ENCODE measurements at regions of chr16 and their contacts with region 1.

Region 1: GRCh38 chr16:77584205-77584859 is 138.0 kb upstream of the NUDT7 start:
- DNase-seq: peak in 1 of 2 experiments; percentile 59
- H3K4me3 ChIP-seq: no peak overlapping the region
- H3K27ac ChIP-seq: no peak overlapping the region
- H3K4me1 ChIP-seq: peaks cover 0 to 4% (median 0%) of the 10 kb centered on the region in 4 experiments; a peak in 1 of 7 replicates
- H3K27me3 ChIP-seq: peaks cover 0 to 2% (median 0%) of the 10 kb centered on the region in 4 experiments; a peak in 1 of 7 replicates
- CTCF ChIP-seq: peak; percentile 2 to 87 (median 65)
- EP300 ChIP-seq: no peak
- POLR2A ChIP-seq: no peak
- RAD21 ChIP-seq: peak; percentile 96 to 97

Region 2: GRCh38 chr16:77236063-77236511 is 348.2 kb before region 1 on chr16:
- CTCF ChIA-PET with region 1: interaction called, 234 read pairs
- POLR2A ChIA-PET with region 1: no interaction called
- DNase-seq: peak; percentile 79 to 98
- H3K4me3 ChIP-seq: no peak overlapping the region
- H3K27ac ChIP-seq: no peak overlapping the region
- H3K4me1 ChIP-seq: peaks cover 0 to 11% (median 7%) of the 10 kb centered on the region in 4 experiments; a peak in 4 of 7 replicates
- H3K27me3 ChIP-seq: no peaks in the 10 kb centered on the region; a peak in 1 of 7 replicates
- CTCF ChIP-seq: peak; percentile 99 to 100 (median 100)
- EP300 ChIP-seq: peak in 1 of 2 experiments; percentile 44; a peak in 1 of 3 replicates
- POLR2A ChIP-seq: no peak
- RAD21 ChIP-seq: peak; percentile 100

Region 3: GRCh38 chr16:77430787-77431585 is 153.3 kb before region 1 on chr16:
- CTCF ChIA-PET with region 1: interaction called, 223 read pairs
- POLR2A ChIA-PET with region 1: no interaction called
- DNase-seq: no peak
- H3K4me3 ChIP-seq: no peak overlapping the region
- H3K27ac ChIP-seq: no peak overlapping the region
- H3K4me1 ChIP-seq: peaks cover 0 to 4% (median 0%) of the 10 kb centered on the region in 4 experiments; a peak in 2 of 7 replicates
- H3K27me3 ChIP-seq: peaks cover 14 to 38% (median 32%) of the 10 kb centered on the region in 4 experiments
- CTCF ChIP-seq: no peak
- EP300 ChIP-seq: no peak
- POLR2A ChIP-seq: no peak
- RAD21 ChIP-seq: no peak; a peak in 1 of 4 replicates

Region 4: DNA sequence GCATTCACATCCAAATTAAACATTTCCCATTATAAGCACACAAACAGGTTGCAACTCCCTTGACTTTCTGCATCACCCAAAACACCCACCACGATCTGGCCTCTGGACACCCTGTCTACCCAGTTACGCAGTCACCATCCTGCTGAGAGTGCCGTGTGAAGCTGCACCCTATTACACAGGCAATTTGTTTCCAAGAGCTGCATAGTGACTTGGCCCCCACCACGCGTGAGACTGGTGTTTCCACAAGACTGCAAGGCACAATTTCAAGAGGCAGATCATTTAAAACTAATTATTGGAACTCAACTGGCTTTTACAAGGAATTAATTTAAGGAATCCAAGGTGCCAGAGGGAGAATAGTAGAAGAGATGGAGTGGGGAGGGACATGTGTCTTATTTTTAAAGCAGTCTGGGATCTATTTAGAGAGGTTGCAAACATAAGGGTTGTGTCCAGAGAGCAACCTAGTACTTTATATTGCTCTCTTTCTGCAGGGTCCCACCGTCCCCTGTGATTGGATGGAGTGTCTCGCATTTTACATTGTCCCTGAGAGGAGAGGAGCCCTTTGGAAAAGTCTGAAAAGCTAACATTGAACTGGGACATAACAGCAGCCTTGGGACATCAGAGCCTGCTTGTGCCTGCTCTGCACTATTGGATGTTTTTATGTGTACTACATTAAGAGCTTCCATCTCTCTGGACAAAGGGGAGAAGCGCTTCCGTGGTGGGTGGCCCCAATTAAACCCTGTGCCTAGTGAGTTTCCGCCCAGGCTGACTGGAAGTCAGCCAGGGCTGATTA is 140.8 kb before region 1 on chr16:
- CTCF ChIA-PET with region 1: interaction called, 223 read pairs
- POLR2A ChIA-PET with region 1: interaction called, 3 read pairs
- DNase-seq: no peak
- H3K4me3 ChIP-seq: no peak overlapping the region
- H3K27ac ChIP-seq: no peak overlapping the region
- H3K4me1 ChIP-seq: peaks cover 0 to 6% (median 2%) of the 10 kb centered on the region in 4 experiments; a peak in 3 of 7 replicates
- H3K27me3 ChIP-seq: no peaks in the 10 kb centered on the region
- CTCF ChIP-seq: no peak
- EP300 ChIP-seq: no peak
- POLR2A ChIP-seq: no peak
- RAD21 ChIP-seq: no peak

Region 5: GRCh38 chr16:77540646-77541045 is 43.7 kb before region 1 on chr16:
- CTCF ChIA-PET with region 1: interaction called, 17 read pairs
- POLR2A ChIA-PET with region 1: no interaction called
- DNase-seq: no peak
- H3K4me3 ChIP-seq: no peak overlapping the region
- H3K27ac ChIP-seq: no peak overlapping the region
- H3K4me1 ChIP-seq: peaks cover 0 to 8% (median 4%) of the 10 kb centered on the region in 4 experiments; a peak in 2 of 7 replicates
- H3K27me3 ChIP-seq: no peaks in the 10 kb centered on the region
- CTCF ChIP-seq: no peak
- EP300 ChIP-seq: no peak
- POLR2A ChIP-seq: no peak
- RAD21 ChIP-seq: no peak

Region 6: DNA sequence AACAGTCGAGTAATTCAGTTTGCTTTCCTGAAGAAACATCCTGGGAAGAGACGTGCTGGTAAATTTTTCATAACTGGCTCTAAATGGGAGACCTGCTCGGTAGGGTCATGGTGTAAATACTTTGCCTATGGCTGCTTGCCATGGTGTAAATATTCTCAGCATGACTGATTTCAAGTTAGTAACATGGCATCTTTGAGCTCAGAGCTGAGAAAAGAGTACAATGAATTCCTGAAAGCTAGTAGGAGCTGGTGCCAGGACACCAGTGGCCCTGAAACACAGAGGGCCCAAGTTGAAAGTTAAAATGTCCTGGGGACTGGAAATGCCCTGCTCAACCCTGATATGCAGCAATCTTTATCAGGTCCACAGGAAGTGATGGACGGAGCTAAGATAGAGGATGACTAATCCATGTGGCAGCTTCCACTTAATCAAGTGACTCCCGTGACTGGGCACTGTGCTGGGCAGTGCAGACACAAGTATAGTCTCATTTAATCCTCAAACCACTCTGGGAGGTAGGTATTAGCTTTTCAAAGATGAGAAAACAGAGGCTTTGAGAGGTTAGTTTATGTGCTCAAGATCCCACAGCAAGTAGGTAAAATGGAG is 19.4 kb before region 1 on chr16:
- CTCF ChIA-PET with region 1: interaction called, 101 read pairs
- POLR2A ChIA-PET with region 1: no interaction called
- DNase-seq: no peak
- H3K4me3 ChIP-seq: no peak overlapping the region
- H3K27ac ChIP-seq: no peak overlapping the region
- H3K4me1 ChIP-seq: no peaks in the 10 kb centered on the region
- H3K27me3 ChIP-seq: no peaks in the 10 kb centered on the region
- CTCF ChIP-seq: no peak
- EP300 ChIP-seq: no peak
- POLR2A ChIP-seq: no peak
- RAD21 ChIP-seq: no peak

Region 7: GRCh38 chr16:77660311-77660710 is 76.0 kb after region 1 on chr16:
- CTCF ChIA-PET with region 1: interaction called, 48 read pairs
- POLR2A ChIA-PET with region 1: no interaction called
- DNase-seq: peak in 1 of 2 experiments; percentile 49
- H3K4me3 ChIP-seq: no peak overlapping the region
- H3K27ac ChIP-seq: no peak overlapping the region
- H3K4me1 ChIP-seq: no peaks in the 10 kb centered on the region
- H3K27me3 ChIP-seq: no peaks in the 10 kb centered on the region
- CTCF ChIP-seq: peak in 2 of 3 experiments; percentile 58 to 60; a peak in 3 of 4 replicates
- EP300 ChIP-seq: no peak
- POLR2A ChIP-seq: no peak
- RAD21 ChIP-seq: peak; percentile 66 to 73